Dorsolateral prefrontal cortex (tissue), 120 donors: ENCODE measurements at regions of chr10 and their contacts with region 1.

Region 1: DNA sequence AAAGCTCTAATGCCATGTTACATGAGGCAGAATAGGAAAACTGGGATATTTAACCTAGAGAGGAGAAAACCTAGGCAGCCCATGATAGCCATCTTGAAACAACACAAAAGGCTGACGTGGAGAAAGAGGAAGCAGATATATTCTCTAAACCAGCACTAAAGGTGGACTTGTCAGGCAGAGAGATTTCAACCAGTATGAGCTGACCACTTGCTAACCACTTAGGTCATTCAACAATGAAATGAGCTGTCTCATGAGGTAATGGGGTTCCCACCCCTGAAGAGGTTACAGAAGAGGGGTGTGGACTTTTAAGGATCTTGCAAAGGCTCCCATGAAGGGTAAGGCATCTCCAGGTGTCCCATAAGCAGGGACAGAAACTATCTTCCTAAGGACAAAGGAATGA is 26.8 kb upstream of the EGR2 start:
- DNase-seq: no peak
- H3K4me3 ChIP-seq: no peak overlapping the region
- H3K27ac ChIP-seq: no peak overlapping the region
- H3K27me3 ChIP-seq: peaks cover 0 to 3% (median 0%) of the 10 kb centered on the region in 45 donors
- CTCF ChIP-seq: no peak

Region 2: GRCh38 chr10:63054889-63055611 is 212.1 kb after region 1 on chr10:
- intact Hi-C with region 1: loop called in 1 of 2 experiments (anchors 10 kb)
- DNase-seq: no peak
- H3K4me3 ChIP-seq: no peak overlapping the region
- H3K27ac ChIP-seq: no peak overlapping the region
- H3K27me3 ChIP-seq: peaks cover 0 to 4% (median 0%) of the 10 kb centered on the region in 45 donors
- CTCF ChIP-seq: no peak